ENCODE measurements at regions of chr3 and their contacts with region 1.

Region 1: DNA sequence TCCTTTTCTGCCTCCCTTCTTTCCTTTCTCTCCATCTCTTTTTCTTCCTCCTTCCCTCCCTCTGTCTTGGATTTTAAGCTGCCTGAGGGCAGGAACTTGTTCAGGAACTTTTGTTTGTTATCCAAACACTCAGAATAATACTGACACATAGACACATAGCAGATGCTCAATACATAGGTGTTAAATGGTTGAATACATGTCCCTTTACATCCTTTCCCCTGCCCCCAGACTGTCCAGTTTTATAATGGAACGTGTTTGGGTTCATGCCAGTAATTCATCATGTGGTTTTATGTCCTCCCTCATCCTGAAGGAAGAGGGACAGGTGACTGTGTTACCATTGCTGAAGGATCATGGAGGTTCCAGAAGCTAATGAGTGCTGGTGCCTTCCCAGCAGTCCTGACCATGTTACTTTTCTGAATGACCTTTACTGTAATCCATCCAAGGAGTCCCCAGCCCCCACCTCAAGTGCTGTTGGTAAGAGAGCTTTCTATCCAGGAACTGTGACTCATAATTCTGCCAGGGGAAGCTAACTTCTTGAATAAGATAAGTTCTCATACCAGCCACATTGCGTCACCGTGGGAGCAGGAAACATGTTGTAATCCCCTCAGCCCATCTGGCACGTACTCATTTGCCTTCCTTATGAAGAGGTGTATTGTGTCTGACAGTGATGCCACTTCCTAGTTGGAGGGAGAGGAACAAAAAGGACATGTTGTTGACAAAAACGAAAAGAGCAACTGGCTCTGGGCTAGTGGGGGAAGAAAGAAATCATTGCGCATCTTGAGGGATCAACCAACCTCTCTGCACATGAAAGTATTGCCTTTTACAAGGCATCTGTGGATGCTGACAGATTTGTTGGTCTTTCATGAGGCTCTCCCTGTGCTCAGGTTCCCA is 52.4 kb downstream of the IL1RAP start:
- DNase-seq: peak; percentile 95

Region 2: DNA sequence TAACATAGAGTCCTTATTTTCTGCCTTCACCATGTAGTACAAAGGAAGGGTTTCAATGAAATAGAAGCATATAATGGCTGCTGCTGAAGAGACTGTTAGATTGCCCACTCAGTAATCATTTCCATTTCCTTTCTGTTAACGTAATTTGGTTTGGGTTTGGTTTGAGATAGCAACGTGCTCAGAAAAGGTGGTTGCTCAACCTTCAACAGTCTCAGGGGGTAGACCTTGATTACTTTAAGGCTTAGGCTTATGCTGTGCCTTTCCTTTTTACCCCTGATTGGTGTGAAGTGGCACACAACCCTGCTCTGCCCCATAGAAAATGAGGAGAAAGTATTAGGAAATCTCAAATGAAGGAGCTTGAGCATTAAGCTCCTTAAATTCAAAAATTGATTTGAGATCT is 1098.8 kb before region 1 on chr3:
- intact Hi-C with region 1: no loop called
- DNase-seq: no peak

Region 3: DNA sequence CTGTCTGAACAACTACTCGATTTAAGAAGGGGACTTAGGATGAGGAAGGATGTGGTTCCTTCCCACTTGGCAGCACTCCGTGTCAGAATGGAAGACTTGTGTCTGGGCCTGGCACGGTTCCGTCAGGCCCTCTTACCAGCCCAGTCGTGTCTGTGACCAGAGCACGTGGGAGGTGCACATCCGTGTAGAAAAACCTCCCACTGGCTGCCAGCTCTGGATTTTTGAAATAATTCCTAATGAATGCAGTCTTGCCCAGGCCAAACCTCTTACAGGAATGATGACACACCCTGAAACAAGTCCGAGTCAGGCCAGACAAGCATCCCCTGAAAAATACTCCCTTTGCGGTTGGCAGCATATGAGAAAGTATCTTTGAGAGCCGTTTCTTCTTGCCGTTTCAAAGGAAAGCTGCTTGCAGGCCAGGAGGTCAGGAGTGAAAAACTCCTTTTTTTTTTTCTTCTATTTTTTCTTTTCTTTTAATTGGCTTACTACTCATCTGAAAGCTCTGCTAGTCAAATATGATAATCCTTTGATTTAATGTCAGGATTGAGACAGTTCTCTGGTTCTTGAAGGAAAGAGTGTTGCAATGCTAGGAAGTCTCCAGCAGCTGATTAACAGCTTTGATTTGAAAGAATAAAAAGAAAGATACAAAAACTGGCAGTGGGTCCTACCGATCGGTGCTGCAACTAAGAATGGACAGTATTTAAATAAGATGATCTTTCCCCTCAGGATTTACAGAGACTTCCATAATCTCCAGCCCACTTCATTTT is 32.6 kb before region 1 on chr3:
- intact Hi-C with region 1: loop called (anchors 5 kb)
- DNase-seq: peak; percentile 84

Measured in cardiac septum (tissue), 1 donor.